HepG2 (cell line): ENCODE measurements at regions of chr17 and their contacts with region 1.

Region 1: GRCh38 chr17:78600181-78600721 is 23.1 kb upstream of the DNAH17 start:
- DNase-seq: no peak
- ATAC-seq: no peak
- H3K4me3 ChIP-seq: no peak overlapping the region
- H3K27ac ChIP-seq: no peak overlapping the region
- H3K4me1 ChIP-seq: peaks cover 78% of the 10 kb centered on the region
- H3K27me3 ChIP-seq: no peaks in the 10 kb centered on the region
- CTCF ChIP-seq: no peak
- EP300 ChIP-seq: no peak
- POLR2A ChIP-seq: no peak
- RAD21 ChIP-seq: no peak

Region 2: GRCh38 chr17:78497115-78497540 is 103.1 kb before region 1 on chr17:
- CTCF ChIA-PET with region 1: interaction called, 14 read pairs
- POLR2A ChIA-PET with region 1: interaction called, 7 read pairs
- in situ Hi-C with region 1: loop called (anchors 10 kb)
- intact Hi-C with region 1: loop called (anchors 1 kb)
- DNase-seq: peak; percentile 79
- ATAC-seq: peak; percentile 83
- H3K4me3 ChIP-seq: no peak overlapping the region
- H3K27ac ChIP-seq: no peak overlapping the region
- H3K4me1 ChIP-seq: peaks cover 36% of the 10 kb centered on the region
- H3K27me3 ChIP-seq: peaks cover 0 to 37% of the 10 kb centered on the region in 2 experiments
- CTCF ChIP-seq: peak; percentile 99
- EP300 ChIP-seq: no peak
- POLR2A ChIP-seq: no peak
- RAD21 ChIP-seq: peak; percentile 99

Region 3: GRCh38 chr17:78557598-78558039 is 42.6 kb before region 1 on chr17:
- CTCF ChIA-PET with region 1: no interaction called
- POLR2A ChIA-PET with region 1: interaction called, 4 read pairs
- in situ Hi-C with region 1: no loop called
- intact Hi-C with region 1: loop called (anchors 1 kb)
- DNase-seq: no peak
- ATAC-seq: peak; percentile 36
- H3K4me3 ChIP-seq: peak overlapping the region in 1 of 3 experiments; percentile 14; a peak in 1 of 6 replicates
- H3K27ac ChIP-seq: peak overlapping the region; percentile 31
- H3K4me1 ChIP-seq: peaks cover 32% of the 10 kb centered on the region
- H3K27me3 ChIP-seq: no peaks in the 10 kb centered on the region; a peak in 1 of 5 replicates
- CTCF ChIP-seq: no peak
- EP300 ChIP-seq: no peak
- POLR2A ChIP-seq: no peak
- RAD21 ChIP-seq: no peak

Region 4: GRCh38 chr17:78588258-78589030 is 11.8 kb before region 1 on chr17:
- CTCF ChIA-PET with region 1: interaction called, 3 read pairs
- POLR2A ChIA-PET with region 1: interaction called, 134 read pairs
- in situ Hi-C with region 1: no loop called
- intact Hi-C with region 1: loop called (anchors 1 kb)
- DNase-seq: peak; percentile 54
- ATAC-seq: peak; percentile 73
- H3K4me3 ChIP-seq: peak overlapping the region; percentile 14 to 61 (median 40); a peak in 5 of 6 replicates
- H3K27ac ChIP-seq: peak overlapping the region; percentile 19
- H3K4me1 ChIP-seq: peaks cover 86% of the 10 kb centered on the region
- H3K27me3 ChIP-seq: no peaks in the 10 kb centered on the region
- CTCF ChIP-seq: no peak; the same call in none of the 2 replicates
- EP300 ChIP-seq: no peak; a peak in 1 of 4 replicates
- POLR2A ChIP-seq: peak in 1 of 2 experiments; percentile 27; a peak in 1 of 4 replicates
- RAD21 ChIP-seq: peak; percentile 31

Region 5: DNA sequence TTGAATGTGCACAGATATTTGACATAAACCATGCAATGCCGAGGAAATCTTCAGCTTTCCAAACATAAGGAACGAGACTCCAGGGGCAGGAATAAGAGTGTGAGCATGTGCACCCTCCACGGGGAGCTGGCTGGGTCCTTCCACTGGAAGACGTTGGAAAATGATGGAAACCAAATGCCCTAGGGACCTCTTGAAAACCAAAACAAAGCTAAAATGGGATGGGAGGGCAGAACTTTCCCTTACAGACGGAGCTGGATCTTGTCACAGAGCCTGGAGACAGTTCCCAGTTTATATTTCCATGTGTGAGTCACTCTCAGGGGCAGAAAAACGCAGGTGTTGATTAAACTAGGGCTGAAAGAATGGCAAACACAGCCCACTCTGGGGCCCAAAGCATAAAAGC is 11.4 kb after region 1 on chr17:
- CTCF ChIA-PET with region 1: no interaction called
- POLR2A ChIA-PET with region 1: interaction called, 11 read pairs
- in situ Hi-C with region 1: no loop called
- intact Hi-C with region 1: no loop called
- DNase-seq: no peak
- ATAC-seq: no peak
- H3K4me3 ChIP-seq: no peak overlapping the region
- H3K27ac ChIP-seq: no peak overlapping the region
- H3K4me1 ChIP-seq: peaks cover 17% of the 10 kb centered on the region
- H3K27me3 ChIP-seq: peaks cover 0 to 9% of the 10 kb centered on the region in 2 experiments; a peak in 1 of 5 replicates
- CTCF ChIP-seq: no peak
- EP300 ChIP-seq: no peak
- POLR2A ChIP-seq: no peak
- RAD21 ChIP-seq: no peak

Region 6: DNA sequence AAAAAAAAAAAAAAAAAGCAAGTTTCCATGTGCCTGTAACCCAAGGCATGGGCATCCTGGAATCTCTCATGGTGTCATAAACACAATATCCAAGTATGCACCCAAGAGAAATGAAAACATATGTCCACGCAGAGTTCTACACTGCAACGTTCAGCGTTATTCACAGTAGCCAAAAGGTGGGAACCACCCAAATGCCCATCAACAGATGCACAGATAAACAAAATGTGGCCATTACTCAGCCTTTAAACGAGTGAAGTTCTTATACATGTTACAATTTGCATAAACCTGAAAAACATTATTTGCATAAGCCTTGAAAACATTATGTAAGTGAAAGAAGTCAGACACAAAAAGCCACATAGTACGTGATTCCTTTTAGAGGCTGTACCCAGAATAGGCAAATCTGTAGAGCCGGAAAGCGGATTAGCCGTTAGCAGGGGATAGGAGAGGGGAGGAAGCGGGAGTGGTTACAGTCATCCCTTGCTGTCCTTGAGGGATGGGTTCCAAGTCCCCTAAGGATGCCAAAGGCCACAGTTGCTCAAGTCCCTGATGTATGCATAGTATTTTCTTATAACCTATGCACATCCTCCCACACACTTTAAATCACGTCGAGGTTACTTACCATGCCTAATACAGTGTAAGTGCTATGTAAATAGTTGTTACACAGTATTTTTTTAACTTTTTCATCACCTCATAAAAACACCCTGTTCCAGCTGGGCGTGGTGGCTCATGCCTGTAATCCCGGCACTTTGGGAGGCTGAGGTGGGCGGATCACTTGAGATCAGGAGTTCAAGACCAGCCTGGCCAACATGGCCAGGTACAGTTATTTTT is 24.3 kb after region 1 on chr17:
- CTCF ChIA-PET with region 1: no interaction called
- POLR2A ChIA-PET with region 1: no interaction called
- in situ Hi-C with region 1: no loop called
- intact Hi-C with region 1: no loop called
- DNase-seq: no peak
- ATAC-seq: no peak
- H3K4me3 ChIP-seq: no peak overlapping the region
- H3K27ac ChIP-seq: no peak overlapping the region
- H3K4me1 ChIP-seq: peaks cover 43% of the 10 kb centered on the region
- H3K27me3 ChIP-seq: peaks cover 0 to 38% of the 10 kb centered on the region in 2 experiments; a peak in 4 of 5 replicates
- CTCF ChIP-seq: no peak
- EP300 ChIP-seq: no peak
- POLR2A ChIP-seq: no peak
- RAD21 ChIP-seq: no peak

Region 7: DNA sequence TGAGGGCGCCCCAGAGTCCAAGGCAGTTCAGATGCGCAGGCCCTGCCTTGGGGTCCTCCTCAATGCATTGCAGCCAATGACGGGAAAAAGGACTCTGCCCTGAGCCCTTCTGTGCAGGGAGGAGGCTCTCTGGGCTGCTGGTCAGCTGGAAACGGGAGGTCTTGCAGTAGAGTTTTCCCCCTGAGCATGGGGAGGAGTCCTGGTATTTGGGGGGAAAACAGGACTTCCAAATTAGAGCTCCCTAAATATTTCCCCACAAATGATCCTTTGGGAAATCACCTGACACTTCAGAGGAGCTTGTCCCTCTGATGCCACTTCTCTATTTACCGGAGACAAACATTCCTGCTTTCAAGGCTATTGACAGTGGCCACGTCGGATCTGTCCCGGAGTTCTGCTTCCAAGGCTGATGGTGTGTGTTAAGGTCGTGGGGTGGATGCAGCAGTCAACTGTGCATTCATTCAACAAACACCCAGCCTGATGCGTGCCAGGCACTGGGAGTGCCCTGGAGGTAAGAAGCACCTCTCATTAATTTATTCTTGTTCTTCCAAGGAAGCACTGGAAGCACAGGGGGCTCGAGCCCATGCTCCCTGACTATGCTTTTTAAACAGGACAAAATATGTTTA is 50.0 kb after region 1 on chr17:
- CTCF ChIA-PET with region 1: no interaction called
- POLR2A ChIA-PET with region 1: interaction called, 17 read pairs
- in situ Hi-C with region 1: no loop called
- intact Hi-C with region 1: no loop called
- DNase-seq: peak; percentile 97
- ATAC-seq: peak; percentile 95
- H3K4me3 ChIP-seq: peak overlapping the region in 1 of 3 experiments; percentile 42; a peak in 2 of 6 replicates
- H3K27ac ChIP-seq: peak overlapping the region; percentile 76
- H3K4me1 ChIP-seq: peaks cover 82% of the 10 kb centered on the region
- H3K27me3 ChIP-seq: no peaks in the 10 kb centered on the region
- CTCF ChIP-seq: peak; percentile 47
- EP300 ChIP-seq: peak; percentile 97 to 98
- POLR2A ChIP-seq: no peak
- RAD21 ChIP-seq: peak; percentile 47; the same call in 1 of the 2 replicates

Region 8: GRCh38 chr17:78665952-78666920 is 66.0 kb after region 1 on chr17:
- CTCF ChIA-PET with region 1: no interaction called
- POLR2A ChIA-PET with region 1: interaction called, 13 read pairs
- in situ Hi-C with region 1: no loop called
- intact Hi-C with region 1: no loop called
- DNase-seq: peak; percentile 88
- ATAC-seq: peak; percentile 78
- H3K4me3 ChIP-seq: peak overlapping the region in 1 of 3 experiments; percentile 12; a peak in 1 of 6 replicates
- H3K27ac ChIP-seq: peak overlapping the region; percentile 41
- H3K4me1 ChIP-seq: peaks cover 52% of the 10 kb centered on the region
- H3K27me3 ChIP-seq: no peaks in the 10 kb centered on the region
- CTCF ChIP-seq: no peak; the same call in 1 of the 2 replicates
- EP300 ChIP-seq: peak in 1 of 2 experiments; percentile 78; a peak in 3 of 4 replicates
- POLR2A ChIP-seq: peak in 1 of 2 experiments; percentile 43; a peak in 2 of 4 replicates
- RAD21 ChIP-seq: no peak